ENCODE measurements at regions of chr1 and their contacts with region 1.

Region 1: GRCh38 chr1:48061162-48062136 is 64.3 kb upstream of the TRABD2B start:
- DNase-seq: peak in 1 of 3 donors; percentile 84
- ATAC-seq: peak; percentile 65
- H3K4me3 ChIP-seq: no peak overlapping the region
- H3K4me1 ChIP-seq: no peaks in the 10 kb centered on the region
- CTCF ChIP-seq: peak; percentile 35

Region 2: GRCh38 chr1:47738560-47739182 is 322.8 kb before region 1 on chr1:
- intact Hi-C with region 1: loop called in 1 of 2 experiments (anchors 10 kb)
- DNase-seq: peak in 2 of 3 donors; percentile 74 to 75
- ATAC-seq: peak; percentile 75
- H3K4me3 ChIP-seq: no peak overlapping the region
- H3K4me1 ChIP-seq: no peaks in the 10 kb centered on the region
- CTCF ChIP-seq: peak; percentile 56

Region 3: GRCh38 chr1:48249868-48250267 is 188.4 kb after region 1 on chr1:
- intact Hi-C with region 1: no loop called
- DNase-seq: no peak
- ATAC-seq: peak; percentile 40
- H3K4me3 ChIP-seq: no peak overlapping the region
- H3K4me1 ChIP-seq: peaks cover 17% of the 10 kb centered on the region
- CTCF ChIP-seq: no peak

Measured in mucosa of descending colon (tissue), 3 donors.